ENCODE measurements at regions of chr11 and their contacts with region 1.

Region 1: GRCh38 chr11:3879967-3880542 is 24.6 kb downstream of the STIM1 start:
- DNase-seq: no peak
- H3K4me3 Mint-ChIP-seq: no peak overlapping the region
- H3K27ac Mint-ChIP-seq: peak overlapping the region; percentile 85
- H3K4me1 Mint-ChIP-seq: peaks cover 74% of the 10 kb centered on the region
- H3K27me3 Mint-ChIP-seq: no peaks in the 10 kb centered on the region

Region 2: GRCh38 chr11:3755151-3755550 is 124.9 kb before region 1 on chr11:
- intact Hi-C with region 1: no loop called
- DNase-seq: no peak
- H3K4me3 Mint-ChIP-seq: no peak overlapping the region
- H3K27ac Mint-ChIP-seq: no peak overlapping the region
- H3K4me1 Mint-ChIP-seq: no peaks in the 10 kb centered on the region
- H3K27me3 Mint-ChIP-seq: no peaks in the 10 kb centered on the region

Region 3: DNA sequence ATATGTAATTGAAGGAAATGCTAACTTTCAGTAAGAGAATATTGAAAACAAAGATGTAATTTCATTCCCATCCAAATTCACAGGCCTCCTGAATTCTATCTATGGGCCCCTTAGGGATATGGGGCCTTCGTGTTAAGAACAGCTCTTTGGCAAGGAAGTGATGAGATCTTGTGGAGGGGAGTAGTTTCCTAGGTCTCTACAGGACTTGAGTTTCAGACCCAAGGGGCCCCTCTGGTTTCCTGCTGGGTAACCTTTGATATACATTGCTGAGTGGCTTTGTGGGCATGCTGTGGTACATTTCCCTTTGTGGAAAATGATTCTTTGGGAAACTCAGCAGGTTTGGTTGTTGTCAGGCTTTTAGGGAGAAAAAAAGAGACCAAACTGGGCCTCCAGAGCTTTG is 18.4 kb before region 1 on chr11:
- intact Hi-C with region 1: loop called (anchors 2 kb)
- DNase-seq: no peak
- H3K4me3 Mint-ChIP-seq: peak overlapping the region; percentile 63
- H3K27ac Mint-ChIP-seq: peak overlapping the region; percentile 88
- H3K4me1 Mint-ChIP-seq: peaks cover 91% of the 10 kb centered on the region
- H3K27me3 Mint-ChIP-seq: no peaks in the 10 kb centered on the region

Region 4: DNA sequence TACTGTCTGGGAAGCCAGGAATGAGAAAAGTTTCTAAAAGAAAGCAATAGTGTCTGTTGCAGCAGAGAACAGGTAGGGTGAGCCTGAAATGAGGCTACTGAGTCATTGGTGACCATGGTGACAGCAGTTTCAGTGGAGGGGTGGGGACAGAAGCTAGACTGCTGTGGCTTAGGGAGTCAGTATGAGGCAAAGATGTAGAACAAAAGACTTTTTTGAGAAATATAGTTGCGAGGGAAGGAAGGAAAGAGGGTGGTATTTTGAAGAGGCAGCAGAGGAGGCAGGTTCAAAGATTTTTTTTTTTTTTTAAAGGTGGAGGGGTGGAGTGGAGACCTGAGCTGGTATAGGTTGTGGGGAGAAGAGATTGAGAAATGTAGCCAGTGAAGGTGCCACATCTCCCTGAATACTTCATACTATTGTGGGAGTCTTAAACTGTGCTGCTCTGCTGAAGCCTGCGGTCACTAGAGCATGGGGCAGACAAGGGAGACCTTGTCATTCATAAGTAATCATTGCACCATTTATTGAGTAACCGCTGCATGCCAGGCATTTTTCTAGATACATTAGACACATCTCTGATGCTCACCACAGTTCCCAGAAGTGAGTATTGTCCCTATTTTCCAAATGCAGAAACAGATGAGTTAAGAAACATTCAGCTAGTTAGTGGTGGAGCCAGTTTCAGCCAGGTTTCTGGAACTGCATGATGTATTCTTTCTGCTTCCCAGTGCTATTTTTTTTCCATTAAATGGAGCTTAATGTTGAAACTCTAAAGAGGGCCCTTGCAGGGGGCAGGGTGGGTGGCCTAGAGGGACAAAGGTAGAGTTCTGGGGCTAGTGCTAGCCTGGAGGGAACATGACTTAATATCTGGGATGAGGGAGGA is 25.3 kb after region 1 on chr11:
- intact Hi-C with region 1: no loop called
- DNase-seq: peak; percentile 54
- H3K4me3 Mint-ChIP-seq: peak overlapping the region; percentile 48
- H3K27ac Mint-ChIP-seq: peak overlapping the region; percentile 76
- H3K4me1 Mint-ChIP-seq: peaks cover 61% of the 10 kb centered on the region
- H3K27me3 Mint-ChIP-seq: no peaks in the 10 kb centered on the region

Measured in activated T-helper 1 cell treated with anti-CD3 and anti-CD28 coated beads, Interleukin-12 subunit alpha, Interleukin-12 subunit beta, Interleukin-2, Interleukin-4 antibody, amounts not matched to agents 30 ng/mL and 10 ng/mL and 1 ng/mL, durations not matched to agents 14 hours and 24 hours and 36 hours (primary cell).